ENCODE measurements at regions of chr1 and their contacts with region 1.

Region 1: GRCh38 chr1:41662061-41662764 is 177.7 kb upstream of the EDN2 start:
- DNase-seq: no peak
- ATAC-seq: peak; percentile 74
- H3K4me3 ChIP-seq: peak overlapping the region; percentile 80
- H3K27ac ChIP-seq: peak overlapping the region; percentile 28; the same call in 1 of the 2 replicates
- H3K4me1 ChIP-seq: peaks cover 26% of the 10 kb centered on the region
- H3K27me3 ChIP-seq: no peaks in the 10 kb centered on the region
- CTCF ChIP-seq: no peak
- EP300 ChIP-seq: no peak
- POLR2A ChIP-seq: peak; percentile 35; the same call in 1 of the 2 replicates
- RAD21 ChIP-seq: no peak

Region 2: DNA sequence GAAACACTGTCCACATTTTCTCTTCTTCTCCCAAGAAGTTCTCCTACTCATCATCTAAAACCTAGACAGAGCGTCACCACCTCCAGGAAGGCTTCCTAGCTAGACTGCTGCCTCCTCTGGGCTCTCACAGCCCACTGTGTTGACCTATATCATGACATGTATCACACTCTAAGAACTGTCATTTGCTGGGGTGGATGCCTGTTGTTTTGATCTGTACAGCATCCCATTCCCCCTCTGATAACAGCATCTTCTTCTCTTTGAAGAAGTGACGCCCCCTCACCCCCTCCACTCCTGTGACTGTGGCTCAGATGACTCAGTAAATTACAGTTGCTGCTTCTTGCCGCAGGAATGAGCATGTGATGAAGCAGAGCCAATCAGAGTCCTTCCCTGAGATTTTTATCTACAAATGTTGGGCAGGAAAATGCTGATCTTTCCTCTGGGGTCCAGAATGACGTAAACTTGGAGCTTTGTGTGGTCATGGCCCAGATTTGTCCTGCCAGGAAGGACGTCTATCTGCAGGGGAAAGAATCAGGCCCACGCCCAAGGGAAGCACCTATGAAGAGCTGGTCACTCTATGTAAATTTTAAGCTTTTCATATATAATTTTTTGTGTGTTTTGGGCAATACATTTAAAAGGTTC is 328.9 kb before region 1 on chr1:
- CTCF ChIA-PET with region 1: no interaction called
- POLR2A ChIA-PET with region 1: no interaction called
- RAD21 ChIA-PET with region 1: no interaction called
- SMC1A ChIA-PET with region 1: no interaction called
- in situ Hi-C with region 1: no loop called
- intact Hi-C with region 1: no loop called
- DNase-seq: no peak
- ATAC-seq: no peak
- H3K4me3 ChIP-seq: no peak overlapping the region
- H3K27ac ChIP-seq: no peak overlapping the region
- H3K4me1 ChIP-seq: no peaks in the 10 kb centered on the region
- H3K27me3 ChIP-seq: no peaks in the 10 kb centered on the region
- CTCF ChIP-seq: no peak
- EP300 ChIP-seq: no peak
- POLR2A ChIP-seq: no peak
- RAD21 ChIP-seq: no peak

Region 3: GRCh38 chr1:41622859-41623723 is 39.1 kb before region 1 on chr1:
- CTCF ChIA-PET with region 1: interaction called, 63 read pairs
- POLR2A ChIA-PET with region 1: interaction called, 4 read pairs
- RAD21 ChIA-PET with region 1: interaction called, 18 read pairs
- SMC1A ChIA-PET with region 1: interaction called, 95 read pairs
- in situ Hi-C with region 1: no loop called
- intact Hi-C with region 1: no loop called
- DNase-seq: peak; percentile 70
- ATAC-seq: peak; percentile 88
- H3K4me3 ChIP-seq: peak overlapping the region; percentile 48
- H3K27ac ChIP-seq: peak overlapping the region; percentile 74
- H3K4me1 ChIP-seq: peaks cover 29% of the 10 kb centered on the region
- H3K27me3 ChIP-seq: no peaks in the 10 kb centered on the region
- CTCF ChIP-seq: no peak
- EP300 ChIP-seq: peak; percentile 55 to 76; a peak in 2 of 4 replicates
- POLR2A ChIP-seq: no peak
- RAD21 ChIP-seq: peak; percentile 13; the same call in 1 of the 2 replicates

Region 4: DNA sequence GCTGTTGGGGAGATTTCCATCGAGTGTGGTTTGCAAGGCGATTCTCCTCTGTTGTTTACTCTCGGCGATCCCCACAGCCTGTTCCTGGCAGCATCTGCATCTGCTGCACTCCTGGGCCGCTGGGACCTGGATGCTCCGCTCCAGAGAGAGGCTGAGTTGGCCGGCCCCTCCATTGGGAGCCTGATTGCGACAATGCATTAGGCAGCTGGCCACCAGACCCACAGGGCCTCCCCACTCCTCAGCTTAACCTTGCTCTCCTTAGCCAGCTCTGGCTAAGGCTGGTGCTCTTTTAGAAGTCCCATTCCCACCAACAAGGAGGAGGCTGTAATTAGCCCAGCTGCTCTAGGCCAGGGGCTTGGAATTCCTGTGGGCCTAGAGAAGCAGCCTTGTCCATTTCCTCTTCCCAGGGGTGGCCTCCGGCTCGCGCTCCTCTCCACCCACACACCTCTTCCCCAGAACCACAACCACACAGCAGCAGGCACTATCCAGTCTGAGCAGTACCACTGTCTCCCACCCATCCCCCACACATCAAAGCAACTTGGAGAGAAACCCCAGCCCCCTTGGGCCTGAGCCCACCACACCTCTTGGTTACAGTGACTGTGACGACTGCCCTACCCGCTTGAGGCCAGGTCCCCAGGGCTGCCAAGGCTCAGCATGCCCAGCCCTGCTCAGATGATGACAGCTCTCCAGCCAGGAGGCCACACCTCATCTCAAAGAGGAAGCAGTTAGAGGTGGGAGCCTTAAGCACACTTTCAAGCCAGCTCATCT is 16.1 kb after region 1 on chr1:
- CTCF ChIA-PET with region 1: interaction called, 20 read pairs
- POLR2A ChIA-PET with region 1: interaction called, 37 read pairs
- RAD21 ChIA-PET with region 1: interaction called, 35 read pairs
- SMC1A ChIA-PET with region 1: interaction called, 32 read pairs
- in situ Hi-C with region 1: no loop called
- intact Hi-C with region 1: no loop called
- DNase-seq: no peak
- ATAC-seq: peak; percentile 82
- H3K4me3 ChIP-seq: no peak overlapping the region
- H3K27ac ChIP-seq: peak overlapping the region; percentile 40; the same call in 1 of the 2 replicates
- H3K4me1 ChIP-seq: peaks cover 43% of the 10 kb centered on the region
- H3K27me3 ChIP-seq: no peaks in the 10 kb centered on the region
- CTCF ChIP-seq: no peak
- EP300 ChIP-seq: no peak
- POLR2A ChIP-seq: 0 out of 2 replicates have a peak, but pooled peaks have one; percentile 24
- RAD21 ChIP-seq: no peak

Region 5: DNA sequence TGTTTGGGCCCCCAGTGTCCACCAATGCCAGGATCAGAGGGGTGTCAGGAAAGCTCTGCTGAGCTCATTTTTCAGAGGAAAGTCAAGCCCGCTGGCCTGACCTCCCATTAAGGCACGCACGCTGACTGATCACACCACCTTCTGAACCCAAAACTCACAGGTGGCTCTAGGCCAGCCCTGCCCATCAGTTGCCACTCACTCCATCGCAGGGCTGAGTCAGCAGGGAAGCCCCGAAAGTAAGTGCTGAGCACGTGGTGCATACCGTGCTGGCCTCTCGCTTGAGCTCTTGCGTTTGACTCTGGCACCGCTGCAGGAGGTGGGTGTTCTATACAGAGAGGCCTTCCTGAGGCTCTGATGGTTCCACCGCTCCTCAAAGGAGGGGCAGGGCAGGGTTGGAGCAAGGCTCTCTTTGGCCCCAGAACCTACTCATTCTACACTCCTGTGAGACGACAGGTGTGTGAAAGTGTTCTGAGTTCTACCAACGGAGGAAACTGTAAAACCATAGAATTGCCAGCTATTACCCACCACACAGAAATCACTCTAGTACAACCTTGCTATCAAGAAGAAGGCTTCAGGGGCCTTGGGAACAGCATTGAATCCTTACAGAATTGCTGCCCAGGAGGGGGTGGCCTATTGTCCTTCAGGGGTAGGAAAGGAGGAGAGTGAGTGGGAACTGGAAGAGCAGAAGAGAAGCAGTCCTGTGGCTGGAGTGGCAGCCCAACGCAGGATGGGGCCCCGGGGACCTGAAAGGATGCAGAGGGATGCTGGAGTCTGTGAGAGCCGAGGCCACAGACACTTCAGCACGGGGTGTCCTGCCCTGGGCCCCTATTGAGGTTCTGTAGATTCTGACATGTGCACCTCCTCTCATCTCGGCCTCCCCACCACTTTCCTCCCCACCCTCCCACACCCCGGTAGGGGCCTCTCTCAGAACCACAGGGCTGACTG is 37.0 kb after region 1 on chr1:
- CTCF ChIA-PET with region 1: interaction called, 11 read pairs
- POLR2A ChIA-PET with region 1: interaction called, 8 read pairs
- RAD21 ChIA-PET with region 1: interaction called, 81 read pairs
- SMC1A ChIA-PET with region 1: interaction called, 27 read pairs
- in situ Hi-C with region 1: no loop called
- intact Hi-C with region 1: no loop called
- DNase-seq: peak; percentile 86
- ATAC-seq: peak; percentile 96
- H3K4me3 ChIP-seq: no peak overlapping the region
- H3K27ac ChIP-seq: peak overlapping the region; percentile 9; the same call in 1 of the 2 replicates
- H3K4me1 ChIP-seq: peaks cover 35% of the 10 kb centered on the region
- H3K27me3 ChIP-seq: no peaks in the 10 kb centered on the region
- CTCF ChIP-seq: no peak
- EP300 ChIP-seq: peak in 1 of 2 experiments; percentile 47; a peak in 1 of 4 replicates
- POLR2A ChIP-seq: no peak; the same call in 1 of the 2 replicates
- RAD21 ChIP-seq: peak; percentile 37

Region 6: GRCh38 chr1:41751804-41752513 is 89.7 kb after region 1 on chr1:
- CTCF ChIA-PET with region 1: interaction called, 3 read pairs
- POLR2A ChIA-PET with region 1: no interaction called
- RAD21 ChIA-PET with region 1: interaction called, 10 read pairs
- SMC1A ChIA-PET with region 1: interaction called, 7 read pairs
- in situ Hi-C with region 1: no loop called
- intact Hi-C with region 1: no loop called
- DNase-seq: peak; percentile 86
- ATAC-seq: peak; percentile 83
- H3K4me3 ChIP-seq: peak overlapping the region; percentile 18; the same call in 1 of the 2 replicates
- H3K27ac ChIP-seq: peak overlapping the region; percentile 83
- H3K4me1 ChIP-seq: peaks cover 55% of the 10 kb centered on the region
- H3K27me3 ChIP-seq: no peaks in the 10 kb centered on the region
- CTCF ChIP-seq: no peak
- EP300 ChIP-seq: peak; percentile 77 to 80; a peak in 3 of 4 replicates
- POLR2A ChIP-seq: 0 out of 2 replicates have a peak, but pooled peaks have one; percentile 17
- RAD21 ChIP-seq: no peak; the same call in 1 of the 2 replicates

Measured in GM12878 (cell line).